PC-9 (cell line): ENCODE measurements at regions of chr3 and their contacts with region 1.

Region 1: GRCh38 chr3:187066228-187066995 is 72.9 kb downstream of the RPL39L start:
- DNase-seq: peak; percentile 23 to 60
- H3K4me3 ChIP-seq: no peak overlapping the region
- H3K27ac ChIP-seq: no peak overlapping the region
- H3K4me1 ChIP-seq: peaks cover 49% of the 10 kb centered on the region
- H3K27me3 ChIP-seq: no peaks in the 10 kb centered on the region
- CTCF ChIP-seq: peak; percentile 42; the same call in 1 of the 2 replicates

Region 2: DNA sequence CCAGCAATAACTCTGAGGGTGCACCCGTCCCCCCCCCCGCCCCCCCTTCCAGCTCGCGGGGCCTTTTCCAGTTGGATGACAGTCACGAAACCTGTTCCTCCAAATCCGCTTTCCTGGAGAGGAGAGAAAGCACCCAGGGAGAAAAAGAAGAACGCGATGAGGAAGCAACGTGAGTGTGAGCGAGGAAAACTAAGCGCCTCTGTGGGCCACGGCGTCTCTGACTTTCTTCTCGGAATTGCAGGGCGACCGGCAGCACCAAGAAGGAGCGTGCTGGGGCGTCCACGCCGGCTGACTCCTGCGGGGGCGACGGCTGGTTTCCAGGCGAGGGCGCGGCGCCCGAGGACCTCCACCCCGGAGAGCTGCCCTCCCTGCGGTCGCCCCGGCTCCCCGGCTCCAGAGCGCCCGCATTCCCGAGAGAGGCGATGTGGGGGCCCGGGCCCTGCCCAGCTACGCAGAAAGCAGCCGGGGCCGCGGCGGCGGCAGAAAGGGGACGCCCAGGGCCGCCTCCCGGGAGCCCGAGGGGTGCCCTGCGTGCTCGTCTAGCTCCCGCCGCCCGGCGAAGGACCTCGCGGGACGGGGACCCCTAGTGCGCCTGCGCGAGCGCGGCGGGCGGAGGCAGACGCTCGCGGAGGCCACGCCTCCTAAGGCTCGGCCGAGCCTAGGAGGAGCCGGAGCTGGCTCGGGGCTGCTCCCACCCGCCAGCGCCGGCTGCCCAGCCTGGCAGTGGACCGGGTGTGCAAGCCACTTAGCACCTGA is 239.3 kb before region 1 on chr3:
- CTCF ChIA-PET with region 1: no interaction called
- POLR2A ChIA-PET with region 1: no interaction called
- intact Hi-C with region 1: loop called (anchors 5 kb)
- DNase-seq: peak; percentile 82 to 92
- H3K4me3 ChIP-seq: peak overlapping the region; percentile 93
- H3K27ac ChIP-seq: no peak overlapping the region
- H3K4me1 ChIP-seq: peaks cover 9% of the 10 kb centered on the region
- H3K27me3 ChIP-seq: peaks cover 42% of the 10 kb centered on the region
- CTCF ChIP-seq: no peak

Region 3: DNA sequence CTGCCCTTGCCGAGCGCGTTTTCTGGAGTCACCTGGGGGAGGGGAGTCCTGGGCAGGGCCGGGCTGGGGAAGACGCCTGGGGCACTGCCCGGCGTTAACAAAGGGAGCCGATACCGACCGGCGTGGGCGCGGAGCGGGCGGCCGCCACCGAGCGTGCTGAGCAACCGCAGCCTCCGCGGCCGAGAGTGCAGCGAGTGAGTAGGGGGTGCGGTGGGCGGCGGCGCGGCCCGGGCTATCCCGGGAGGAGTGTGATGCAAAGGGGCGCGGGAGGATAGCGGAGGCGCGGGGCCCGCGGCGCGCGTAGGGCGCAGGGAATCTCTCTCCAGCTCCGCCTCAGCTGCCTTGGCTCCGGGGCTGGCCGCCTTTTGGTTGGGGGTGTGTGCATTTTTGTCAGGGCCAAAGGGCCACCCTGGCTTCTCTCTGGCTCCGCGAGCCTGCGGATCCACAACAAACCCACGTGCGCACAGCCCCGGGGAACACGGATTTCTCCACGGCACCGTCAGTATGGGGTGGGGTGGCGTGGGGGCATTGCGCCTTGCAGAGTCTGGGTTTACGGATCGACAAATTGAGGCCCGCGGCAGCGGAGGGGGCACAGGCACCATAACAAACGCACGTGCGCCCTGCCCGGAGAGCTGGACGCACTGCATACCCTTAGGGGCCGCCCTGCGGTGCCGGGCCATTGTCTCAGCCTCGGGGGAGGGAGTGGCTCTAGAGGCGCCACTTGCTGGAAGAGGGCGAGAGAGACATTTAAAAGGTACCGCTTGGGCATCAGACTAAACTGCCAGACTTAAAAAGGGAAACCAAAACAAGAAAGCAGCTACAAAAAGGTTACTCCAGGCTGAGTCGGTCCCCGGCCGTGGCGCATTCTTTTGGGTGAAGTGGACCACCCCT is 135.5 kb before region 1 on chr3:
- CTCF ChIA-PET with region 1: no interaction called
- POLR2A ChIA-PET with region 1: no interaction called
- intact Hi-C with region 1: loop called (anchors 2 kb)
- DNase-seq: peak; percentile 65 to 71
- H3K4me3 ChIP-seq: peak overlapping the region; percentile 97
- H3K27ac ChIP-seq: no peak overlapping the region
- H3K4me1 ChIP-seq: peaks cover 12% of the 10 kb centered on the region
- H3K27me3 ChIP-seq: no peaks in the 10 kb centered on the region
- CTCF ChIP-seq: peak; percentile 29; the same call in 1 of the 2 replicates

Region 4: GRCh38 chr3:187082758-187083375 is 16.5 kb after region 1 on chr3:
- CTCF ChIA-PET with region 1: no interaction called
- POLR2A ChIA-PET with region 1: interaction called, 12 read pairs
- intact Hi-C with region 1: no loop called
- DNase-seq: no peak
- H3K4me3 ChIP-seq: no peak overlapping the region
- H3K27ac ChIP-seq: no peak overlapping the region
- H3K4me1 ChIP-seq: no peaks in the 10 kb centered on the region
- H3K27me3 ChIP-seq: no peaks in the 10 kb centered on the region
- CTCF ChIP-seq: no peak

Region 5: DNA sequence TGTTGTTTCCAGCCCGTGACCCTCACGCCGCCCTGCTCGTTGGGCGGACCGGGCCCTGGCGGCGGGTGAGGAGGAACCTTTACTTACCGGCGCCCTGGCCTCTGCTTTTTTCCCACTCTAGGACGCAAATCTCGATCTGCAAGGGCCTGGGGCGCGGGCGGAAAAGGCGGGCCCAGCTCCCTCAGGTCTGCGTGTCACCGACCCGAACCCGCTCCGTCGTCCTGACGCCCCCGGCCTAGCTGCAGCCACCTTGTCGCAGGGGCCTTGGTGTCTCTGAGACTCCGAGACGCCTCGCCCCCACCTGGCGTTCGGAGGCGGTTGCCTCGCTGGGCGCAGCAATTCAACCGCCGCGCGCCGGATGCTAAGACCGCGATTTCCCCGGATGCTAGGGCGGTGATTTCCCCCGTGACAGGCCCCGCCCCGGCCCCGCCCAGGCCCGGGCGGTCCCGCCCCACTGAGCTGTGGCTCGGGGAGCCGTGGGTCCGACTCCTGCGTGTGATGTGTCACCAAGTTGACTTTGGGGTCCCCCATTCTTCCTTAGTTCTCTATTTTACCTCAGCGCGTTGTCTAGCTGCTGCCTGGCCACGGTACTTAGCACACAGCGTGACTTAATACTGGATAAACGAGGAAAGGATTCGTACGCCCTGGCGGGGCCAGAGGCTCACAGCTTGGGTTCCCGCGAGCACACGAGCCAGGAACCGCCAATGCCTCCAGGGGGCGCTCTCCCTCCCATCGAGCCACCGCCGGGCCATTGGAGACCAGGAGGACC is 72.9 kb after region 1 on chr3 and contains the start of gene RPL39L:
- CTCF ChIA-PET with region 1: interaction called, 3 read pairs
- POLR2A ChIA-PET with region 1: no interaction called
- intact Hi-C with region 1: loop called (anchors 1 kb)
- DNase-seq: peak; percentile 83 to 92
- H3K4me3 ChIP-seq: peak within 1 kb of the TSS; percentile 73
- H3K27ac ChIP-seq: peak within 1 kb of the TSS; percentile 57
- H3K4me1 ChIP-seq: peaks cover 22% of the 10 kb centered on the region
- H3K27me3 ChIP-seq: no peaks in the 10 kb centered on the region
- CTCF ChIP-seq: peak; percentile 99
- total RNA-seq, gene RPL39L: 73.9 and 81.3 TPM in 2 replicates